GM12878 (cell line): ENCODE measurements at regions of chr20 and their contacts with region 1.

Region 1: DNA sequence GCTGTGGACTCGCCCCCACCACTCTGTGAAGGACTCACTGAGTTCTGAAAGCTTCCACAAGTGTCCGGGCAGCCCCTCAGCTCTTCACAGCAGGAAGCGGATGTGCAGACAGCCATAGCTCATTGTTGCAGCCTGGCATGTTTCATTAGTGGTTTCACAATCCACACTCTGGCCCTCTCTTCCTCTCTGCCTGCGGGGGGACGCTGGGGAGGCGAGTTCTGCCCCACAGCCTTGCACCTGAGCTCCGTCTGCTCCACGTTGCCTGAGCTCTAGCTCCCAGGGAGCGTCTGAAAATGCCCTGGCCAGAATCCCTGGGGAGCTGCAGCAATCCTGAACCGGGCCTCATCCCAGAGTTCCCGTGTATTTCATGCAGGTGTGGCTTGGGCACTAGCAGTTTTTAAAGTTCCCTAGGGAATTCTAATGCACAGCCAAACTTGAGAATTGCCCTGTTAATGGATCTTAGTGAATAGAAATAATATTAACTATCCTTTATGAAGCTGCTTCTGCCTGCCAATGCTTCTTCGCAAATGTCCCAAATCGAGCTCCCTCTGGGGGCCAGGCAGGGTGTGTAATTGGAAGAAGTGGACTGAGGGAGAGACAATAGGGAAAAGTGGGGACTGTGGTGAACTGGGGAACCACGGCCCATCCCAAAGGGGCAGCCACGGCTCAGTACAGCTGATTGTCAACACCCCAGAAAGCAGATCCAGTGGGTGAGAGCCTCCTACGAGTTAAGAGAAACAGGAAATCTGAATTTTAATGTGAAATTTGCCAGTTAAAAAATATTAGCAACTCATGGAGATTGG is 51.5 kb downstream of the CTCFL start:
- DNase-seq: peak; percentile 68
- ATAC-seq: peak; percentile 82
- H3K4me3 ChIP-seq: no peak overlapping the region
- H3K27ac ChIP-seq: peak overlapping the region; percentile 43
- H3K4me1 ChIP-seq: peaks cover 64% of the 10 kb centered on the region
- H3K27me3 ChIP-seq: no peaks in the 10 kb centered on the region
- CTCF ChIP-seq: 0 out of 6 replicates have a peak, but pooled peaks of 2 of the 3 experiments have one; percentile 10 to 11
- EP300 ChIP-seq: no peak
- POLR2A ChIP-seq: 0 out of 2 replicates have a peak, but pooled peaks have one; percentile 28
- RAD21 ChIP-seq: peak; percentile 3; the same call in 1 of the 2 replicates

Region 2: GRCh38 chr20:57179265-57179664 is 294.2 kb before region 1 on chr20:
- CTCF ChIA-PET with region 1: no interaction called
- POLR2A ChIA-PET with region 1: no interaction called
- RAD21 ChIA-PET with region 1: no interaction called
- SMC1A ChIA-PET with region 1: no interaction called
- in situ Hi-C with region 1: no loop called
- intact Hi-C with region 1: no loop called
- DNase-seq: no peak
- ATAC-seq: no peak
- H3K4me3 ChIP-seq: no peak overlapping the region
- H3K27ac ChIP-seq: no peak overlapping the region
- H3K4me1 ChIP-seq: peaks cover 3% of the 10 kb centered on the region
- H3K27me3 ChIP-seq: no peaks in the 10 kb centered on the region; a peak in 2 of 4 replicates
- CTCF ChIP-seq: no peak
- EP300 ChIP-seq: no peak
- POLR2A ChIP-seq: no peak
- RAD21 ChIP-seq: no peak

Region 3: DNA sequence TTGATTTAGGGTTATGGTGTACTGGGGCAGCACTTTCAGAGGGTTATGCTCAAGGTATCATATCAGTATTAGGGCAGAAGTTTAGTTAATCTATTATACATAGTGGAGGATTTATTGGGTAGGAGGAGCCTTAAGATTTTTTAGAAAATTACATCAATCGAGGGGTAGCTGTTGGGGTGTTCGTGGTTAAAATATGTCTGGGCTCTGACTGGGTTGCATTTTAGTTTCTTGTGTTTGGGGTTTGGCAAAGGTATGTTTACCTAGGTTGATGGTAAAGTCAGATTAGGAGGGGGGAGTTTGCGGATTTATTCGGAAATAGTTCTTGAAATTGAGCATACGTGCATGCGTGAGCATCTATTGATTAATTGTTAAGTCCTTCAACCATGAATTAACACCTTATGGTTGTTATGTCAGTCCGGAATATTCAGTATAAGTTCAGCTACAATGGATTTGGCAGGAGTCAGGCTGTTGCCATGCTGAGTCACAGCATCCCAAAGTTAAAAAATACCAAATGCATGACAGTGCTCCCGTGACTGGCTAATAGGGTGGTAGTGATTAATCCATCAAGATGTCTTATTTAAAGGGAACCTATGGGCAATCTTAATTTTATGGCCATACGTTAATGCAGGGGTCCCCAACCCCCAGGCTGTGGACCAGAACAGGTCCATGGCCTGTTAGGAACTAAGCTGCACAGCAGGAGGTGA is 112.1 kb before region 1 on chr20:
- CTCF ChIA-PET with region 1: no interaction called
- POLR2A ChIA-PET with region 1: no interaction called
- RAD21 ChIA-PET with region 1: no interaction called
- SMC1A ChIA-PET with region 1: no interaction called
- in situ Hi-C with region 1: no loop called
- intact Hi-C with region 1: no loop called
- DNase-seq: no peak
- ATAC-seq: no peak
- H3K4me3 ChIP-seq: no peak overlapping the region
- H3K27ac ChIP-seq: no peak overlapping the region
- H3K4me1 ChIP-seq: no peaks in the 10 kb centered on the region
- H3K27me3 ChIP-seq: no peaks in the 10 kb centered on the region
- CTCF ChIP-seq: no peak
- EP300 ChIP-seq: no peak
- POLR2A ChIP-seq: no peak
- RAD21 ChIP-seq: no peak

Region 4: GRCh38 chr20:57432874-57433491 is 40.5 kb before region 1 on chr20:
- CTCF ChIA-PET with region 1: interaction called, 7 read pairs
- POLR2A ChIA-PET with region 1: interaction called, 20 read pairs
- RAD21 ChIA-PET with region 1: interaction called, 13 read pairs
- SMC1A ChIA-PET with region 1: interaction called, 6 read pairs
- in situ Hi-C with region 1: no loop called
- intact Hi-C with region 1: no loop called
- DNase-seq: peak; percentile 76
- ATAC-seq: peak; percentile 94
- H3K4me3 ChIP-seq: 0 out of 2 replicates have a peak overlapping the region, but pooled peaks have one; percentile 26
- H3K27ac ChIP-seq: peak overlapping the region; percentile 57
- H3K4me1 ChIP-seq: peaks cover 39% of the 10 kb centered on the region
- H3K27me3 ChIP-seq: no peaks in the 10 kb centered on the region
- CTCF ChIP-seq: no peak
- EP300 ChIP-seq: peak; percentile 41 to 56; a peak in 2 of 4 replicates
- POLR2A ChIP-seq: no peak
- RAD21 ChIP-seq: no peak

Region 5: GRCh38 chr20:57493091-57493615 is 19.7 kb after region 1 on chr20:
- CTCF ChIA-PET with region 1: interaction called, 10 read pairs
- POLR2A ChIA-PET with region 1: interaction called, 4 read pairs
- RAD21 ChIA-PET with region 1: interaction called, 13 read pairs
- SMC1A ChIA-PET with region 1: interaction called, 12 read pairs
- in situ Hi-C with region 1: no loop called
- intact Hi-C with region 1: no loop called
- DNase-seq: no peak
- ATAC-seq: no peak
- H3K4me3 ChIP-seq: no peak overlapping the region
- H3K27ac ChIP-seq: no peak overlapping the region
- H3K4me1 ChIP-seq: no peaks in the 10 kb centered on the region
- H3K27me3 ChIP-seq: peaks cover 0 to 2% of the 10 kb centered on the region in 2 experiments; a peak in 1 of 4 replicates
- CTCF ChIP-seq: no peak
- EP300 ChIP-seq: no peak
- POLR2A ChIP-seq: no peak
- RAD21 ChIP-seq: no peak